ENCODE measurements at regions of chr2 and their contacts with region 1.

Region 1: GRCh38 chr2:71299507-71299906 is 32.1 kb upstream of the ZNF638 start:
- DNase-seq: peak in 2 of 5 donors; percentile 23 to 26
- H3K4me3 ChIP-seq: no peak overlapping the region
- H3K4me3 Mint-ChIP-seq: no peak overlapping the region
- H3K27ac ChIP-seq: no peak overlapping the region
- H3K27ac Mint-ChIP-seq: no peak overlapping the region
- H3K4me1 ChIP-seq: no peaks in the 10 kb centered on the region
- H3K4me1 Mint-ChIP-seq: no peaks in the 10 kb centered on the region
- H3K27me3 ChIP-seq: no peaks in the 10 kb centered on the region
- H3K27me3 Mint-ChIP-seq: peaks cover 13 to 24% of the 10 kb centered on the region in 2 donors

Region 2: DNA sequence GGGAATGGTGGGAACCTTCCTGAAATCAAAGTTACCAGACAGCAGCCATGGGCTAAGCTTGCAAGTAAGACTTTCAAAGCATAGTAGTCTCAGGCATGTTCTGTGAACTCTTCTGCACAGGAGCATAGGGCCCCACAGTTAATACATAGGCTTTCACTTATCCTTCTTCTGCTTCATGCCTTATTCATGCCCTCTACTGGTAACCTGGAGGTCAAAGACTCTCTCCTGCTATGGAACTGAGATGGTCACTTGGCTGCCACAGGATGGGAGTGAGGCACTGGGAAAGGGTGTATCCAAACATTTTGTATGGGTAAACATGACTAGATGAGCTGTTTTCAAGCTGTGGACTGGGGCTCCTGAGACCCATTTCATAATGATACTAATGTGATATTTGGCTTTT is 17.0 kb before region 1 on chr2:
- CTCF ChIA-PET with region 1: interaction called, 10 read pairs
- POLR2A ChIA-PET with region 1: no interaction called
- DNase-seq: no peak
- H3K4me3 ChIP-seq: no peak overlapping the region
- H3K4me3 Mint-ChIP-seq: no peak overlapping the region
- H3K27ac ChIP-seq: no peak overlapping the region
- H3K27ac Mint-ChIP-seq: no peak overlapping the region
- H3K4me1 ChIP-seq: peaks cover 4% of the 10 kb centered on the region
- H3K4me1 Mint-ChIP-seq: peaks cover 5% of the 10 kb centered on the region in 3 donors
- H3K27me3 ChIP-seq: peaks cover 12% of the 10 kb centered on the region
- H3K27me3 Mint-ChIP-seq: peaks cover 36 to 74% of the 10 kb centered on the region in 2 donors

Region 3: GRCh38 chr2:71331581-71332434 is 32.3 kb after region 1 on chr2 and contains the start of gene ZNF638:
- CTCF ChIA-PET with region 1: interaction called, 20 read pairs
- POLR2A ChIA-PET with region 1: interaction called, 7 read pairs
- DNase-seq: peak; percentile 89 to 94 (median 92)
- H3K4me3 ChIP-seq: peak within 1 kb of the TSS; percentile 88
- H3K4me3 Mint-ChIP-seq: peak within 1 kb of the TSS; percentile 95 to 100 (median 100)
- H3K27ac ChIP-seq: peak within 1 kb of the TSS; percentile 91
- H3K27ac Mint-ChIP-seq: peak within 1 kb of the TSS; percentile 87 to 100 (median 100)
- H3K4me1 ChIP-seq: peaks cover 42% of the 10 kb centered on the region
- H3K4me1 Mint-ChIP-seq: peaks cover 44 to 55% (median 53%) of the 10 kb centered on the region in 3 donors
- H3K27me3 ChIP-seq: no peaks in the 10 kb centered on the region
- H3K27me3 Mint-ChIP-seq: peaks cover 2 to 13% of the 10 kb centered on the region in 2 donors
- total RNA-seq, gene ZNF638: 77.9 to 83.4 TPM

Region 4: GRCh38 chr2:71498261-71498701 is 198.8 kb after region 1 on chr2:
- CTCF ChIA-PET with region 1: interaction called, 195 read pairs
- POLR2A ChIA-PET with region 1: no interaction called
- DNase-seq: no peak
- H3K4me3 ChIP-seq: no peak overlapping the region
- H3K4me3 Mint-ChIP-seq: no peak overlapping the region
- H3K27ac ChIP-seq: no peak overlapping the region
- H3K27ac Mint-ChIP-seq: peak overlapping the region in 1 of 8 donors; percentile 39
- H3K4me1 ChIP-seq: no peaks in the 10 kb centered on the region
- H3K4me1 Mint-ChIP-seq: no peaks in the 10 kb centered on the region
- H3K27me3 ChIP-seq: no peaks in the 10 kb centered on the region
- H3K27me3 Mint-ChIP-seq: peaks cover 3% of the 10 kb centered on the region in 2 donors

Region 5: DNA sequence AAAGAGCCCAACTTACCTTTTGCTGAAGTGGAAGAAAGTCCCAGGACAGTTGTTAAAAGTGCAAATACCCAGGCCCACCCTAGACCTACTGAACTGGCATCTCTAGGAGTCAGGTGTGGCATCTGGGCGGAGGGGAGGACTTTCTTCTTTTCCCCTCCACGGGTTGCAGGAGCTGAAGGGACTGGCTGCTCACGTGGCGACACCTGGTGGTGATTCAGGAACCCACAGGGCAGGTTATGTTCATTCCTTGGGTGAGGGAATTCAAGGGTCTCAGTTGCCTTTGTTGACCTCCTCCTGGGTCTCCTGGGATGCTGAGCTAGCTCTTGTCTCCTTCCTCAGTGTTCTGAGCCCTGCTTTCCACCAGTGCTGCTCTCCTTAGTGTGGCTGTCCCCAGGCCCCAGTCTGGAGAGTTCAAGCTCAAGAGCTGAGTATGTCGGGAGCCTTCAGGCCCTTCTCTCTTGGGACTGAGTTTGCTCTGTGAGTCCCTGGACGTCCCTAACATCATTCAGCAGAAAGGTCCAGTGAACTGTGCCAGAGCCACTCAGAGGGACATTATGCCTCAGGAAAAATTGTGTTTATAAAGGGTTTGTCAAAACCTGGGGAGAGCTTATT is 210.8 kb after region 1 on chr2:
- CTCF ChIA-PET with region 1: interaction called, 195 read pairs
- POLR2A ChIA-PET with region 1: interaction called, 6 read pairs
- DNase-seq: peak; percentile 49 to 77 (median 57)
- H3K4me3 ChIP-seq: no peak overlapping the region
- H3K4me3 Mint-ChIP-seq: no peak overlapping the region
- H3K27ac ChIP-seq: no peak overlapping the region
- H3K27ac Mint-ChIP-seq: no peak overlapping the region
- H3K4me1 ChIP-seq: no peaks in the 10 kb centered on the region
- H3K4me1 Mint-ChIP-seq: peaks cover 0 to 3% (median 0%) of the 10 kb centered on the region in 3 donors
- H3K27me3 ChIP-seq: no peaks in the 10 kb centered on the region
- H3K27me3 Mint-ChIP-seq: peaks cover 8 to 12% of the 10 kb centered on the region in 2 donors